GM12878 (cell line): ENCODE measurements at regions of chr9 and their contacts with region 1.

Region 1: DNA sequence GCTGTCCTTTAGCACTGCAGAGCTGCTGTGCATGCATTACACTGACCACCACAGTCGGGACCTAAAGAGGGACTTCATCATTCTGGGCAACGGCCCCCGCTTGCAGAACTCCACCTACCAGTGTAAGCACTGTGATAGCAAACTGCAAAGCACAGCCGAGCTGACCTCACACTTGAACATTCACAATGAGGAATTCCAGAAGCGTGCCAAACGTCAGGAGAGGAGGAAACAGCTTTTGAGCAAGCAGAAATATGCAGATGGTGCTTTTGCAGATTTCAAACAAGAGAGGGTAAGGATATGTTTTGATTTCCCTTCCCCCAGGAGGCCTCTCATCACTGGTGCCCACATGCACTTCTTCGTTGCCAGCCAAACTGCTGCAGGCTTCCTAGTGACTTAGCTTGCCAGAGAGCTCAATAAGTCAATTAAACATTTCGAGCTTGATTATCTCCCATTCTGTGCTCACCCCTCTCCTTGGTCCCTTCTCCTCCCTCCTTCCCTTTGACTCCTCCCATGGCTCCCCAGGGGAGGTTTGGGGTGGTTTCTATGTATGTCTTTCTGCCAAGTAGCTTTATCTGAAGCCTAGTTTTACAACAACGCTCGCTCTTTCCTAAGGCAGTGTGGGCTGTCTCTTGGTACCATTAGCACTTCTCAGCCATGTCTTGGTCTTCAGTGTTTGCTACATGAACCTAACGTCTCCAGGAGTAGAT is 66.7 kb downstream of the ZNF462 start:
- DNase-seq: no peak
- ATAC-seq: no peak
- H3K4me3 ChIP-seq: no peak overlapping the region
- H3K27ac ChIP-seq: no peak overlapping the region
- H3K4me1 ChIP-seq: no peaks in the 10 kb centered on the region
- H3K27me3 ChIP-seq: no peaks in the 10 kb centered on the region; a peak in 1 of 4 replicates
- CTCF ChIP-seq: no peak
- EP300 ChIP-seq: no peak
- POLR2A ChIP-seq: no peak
- RAD21 ChIP-seq: no peak

Region 2: DNA sequence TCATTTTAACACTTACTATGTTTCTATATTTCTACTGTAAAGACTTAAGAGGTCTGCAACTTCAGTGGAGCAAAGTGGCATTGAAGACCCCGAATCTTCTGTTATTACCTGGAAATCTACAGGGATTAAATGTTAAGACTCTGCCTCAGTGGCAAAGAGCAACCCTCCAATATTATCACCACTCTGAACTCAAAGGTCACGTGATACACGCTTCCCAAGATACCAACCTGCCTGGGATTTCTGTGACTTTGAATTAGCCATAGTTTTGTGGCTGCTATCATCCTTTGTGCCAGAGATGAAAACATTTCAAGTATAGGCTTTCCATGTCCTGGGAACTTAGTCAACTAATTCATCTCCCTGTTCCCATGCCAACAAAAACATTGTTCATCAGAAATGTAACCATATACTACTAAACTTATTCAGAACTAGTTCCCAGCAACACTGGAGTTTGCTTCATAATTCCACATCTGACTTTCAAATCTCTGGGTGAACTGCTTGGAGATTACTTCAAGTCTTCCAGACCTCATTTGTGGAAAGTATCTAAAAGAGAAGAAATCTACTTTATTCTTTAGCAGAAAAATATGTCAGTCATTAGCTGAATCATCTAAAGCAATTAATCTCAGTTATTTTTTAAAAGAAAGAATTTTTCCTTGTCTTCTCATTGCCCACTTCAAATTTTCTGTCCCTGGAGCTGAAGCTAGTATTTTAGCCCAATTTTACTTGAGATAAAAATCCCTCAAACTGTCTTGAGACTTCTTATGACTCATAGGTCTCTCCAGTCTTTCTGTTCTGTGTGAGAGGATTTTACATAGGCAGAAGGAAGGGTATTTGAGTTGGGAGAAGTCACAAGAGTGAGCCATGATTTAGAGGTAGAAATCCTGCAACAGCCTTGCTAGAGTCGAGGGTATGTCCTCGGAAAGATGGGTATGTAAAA is 16.4 kb after region 1 on chr9:
- CTCF ChIA-PET with region 1: interaction called, 4 read pairs
- POLR2A ChIA-PET with region 1: no interaction called
- RAD21 ChIA-PET with region 1: no interaction called
- SMC1A ChIA-PET with region 1: interaction called, 14 read pairs
- in situ Hi-C with region 1: no loop called
- intact Hi-C with region 1: no loop called
- DNase-seq: no peak
- ATAC-seq: no peak
- H3K4me3 ChIP-seq: no peak overlapping the region
- H3K27ac ChIP-seq: no peak overlapping the region
- H3K4me1 ChIP-seq: no peaks in the 10 kb centered on the region
- H3K27me3 ChIP-seq: no peaks in the 10 kb centered on the region
- CTCF ChIP-seq: no peak
- EP300 ChIP-seq: no peak
- POLR2A ChIP-seq: no peak
- RAD21 ChIP-seq: no peak